ENCODE measurements at regions of chr15 and their contacts with region 1.

Region 1: DNA sequence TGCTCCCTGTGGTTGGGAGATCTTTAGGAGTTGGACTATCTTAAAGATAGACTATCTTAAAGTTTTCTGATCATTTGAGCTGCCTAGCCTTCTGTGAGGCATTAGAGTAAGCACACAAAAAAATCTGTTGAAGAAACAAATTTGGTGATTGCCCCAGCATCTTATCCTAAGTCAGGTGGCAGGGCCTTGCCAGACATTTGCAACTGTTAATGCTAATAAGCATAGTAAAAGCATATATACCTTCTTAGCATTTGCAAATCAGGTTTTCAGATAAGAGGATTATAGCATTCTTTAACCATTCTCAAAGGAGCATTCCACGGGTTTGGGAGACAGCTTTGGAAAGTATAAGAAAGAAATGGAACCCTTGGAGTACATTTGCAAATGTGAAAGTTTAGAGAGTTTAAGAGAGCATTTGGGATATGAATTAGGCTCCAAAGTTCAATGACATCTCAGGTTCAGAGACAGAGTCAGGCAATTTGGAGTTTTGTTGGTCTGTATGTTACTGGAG is 61.0 kb downstream of the SEMA6D start:
- DNase-seq: no peak
- H3K4me3 ChIP-seq: no peak overlapping the region
- H3K27ac ChIP-seq: no peak overlapping the region
- H3K4me1 ChIP-seq: peaks cover 3% of the 10 kb centered on the region
- H3K27me3 ChIP-seq: no peaks in the 10 kb centered on the region
- CTCF ChIP-seq: no peak
- EP300 ChIP-seq: no peak
- POLR2A ChIP-seq: no peak

Region 2: DNA sequence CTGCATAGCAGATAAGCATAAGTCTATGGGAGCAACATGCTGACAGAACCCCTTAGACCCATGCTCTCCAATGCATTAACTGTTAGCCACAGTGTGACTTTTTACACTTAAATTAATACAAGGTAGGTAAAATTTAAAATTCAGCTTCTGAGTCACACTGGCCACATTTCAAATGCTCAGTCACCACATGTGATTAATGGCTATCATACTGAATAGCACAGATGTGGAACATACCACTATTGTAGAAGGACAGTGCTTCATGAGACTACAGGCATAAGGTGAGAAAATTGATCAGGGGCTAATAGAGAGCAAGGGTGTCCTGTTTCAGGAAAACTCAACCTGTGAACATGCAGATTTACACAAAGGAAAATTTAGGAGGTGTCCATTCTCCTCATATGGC is 418.0 kb before region 1 on chr15:
- intact Hi-C with region 1: no loop called
- DNase-seq: no peak
- H3K4me3 ChIP-seq: no peak overlapping the region
- H3K27ac ChIP-seq: no peak overlapping the region
- H3K4me1 ChIP-seq: no peaks in the 10 kb centered on the region
- H3K27me3 ChIP-seq: no peaks in the 10 kb centered on the region
- CTCF ChIP-seq: no peak
- EP300 ChIP-seq: no peak
- POLR2A ChIP-seq: no peak

Region 3: DNA sequence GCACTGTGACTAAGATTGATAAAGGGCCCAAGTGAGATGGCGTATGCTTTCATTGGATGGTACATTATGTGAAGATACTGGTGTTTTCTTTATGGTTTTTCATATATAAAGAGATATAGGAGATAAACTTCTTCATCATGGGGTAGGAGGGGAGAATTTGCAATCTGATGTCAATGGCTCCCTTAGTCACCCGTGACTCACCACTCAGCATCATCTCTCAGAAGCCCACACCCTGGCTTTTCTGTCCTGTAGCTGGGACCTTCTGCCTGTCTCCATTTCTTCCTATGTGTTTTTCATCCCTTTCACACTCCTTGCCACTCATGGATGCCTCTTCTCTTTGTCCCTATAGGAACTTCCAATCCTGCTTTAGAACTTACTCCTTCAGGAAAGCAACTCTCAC is 175.3 kb before region 1 on chr15:
- intact Hi-C with region 1: no loop called
- DNase-seq: no peak
- H3K4me3 ChIP-seq: no peak overlapping the region
- H3K27ac ChIP-seq: no peak overlapping the region
- H3K4me1 ChIP-seq: peaks cover 2% of the 10 kb centered on the region
- H3K27me3 ChIP-seq: no peaks in the 10 kb centered on the region
- CTCF ChIP-seq: no peak
- EP300 ChIP-seq: no peak
- POLR2A ChIP-seq: no peak

Region 4: GRCh38 chr15:48313216-48313615 is 534.9 kb after region 1 on chr15:
- intact Hi-C with region 1: loop called in 1 of 4 experiments (anchors 5 kb)
- DNase-seq: no peak
- H3K4me3 ChIP-seq: no peak overlapping the region
- H3K27ac ChIP-seq: no peak overlapping the region
- H3K4me1 ChIP-seq: no peaks in the 10 kb centered on the region
- H3K27me3 ChIP-seq: no peaks in the 10 kb centered on the region
- CTCF ChIP-seq: no peak
- EP300 ChIP-seq: no peak
- POLR2A ChIP-seq: no peak

Measured in ovary (tissue), 10 donors.